PC-3 (cell line): ENCODE measurements at regions of chr12 and their contacts with region 1.

Region 1: DNA sequence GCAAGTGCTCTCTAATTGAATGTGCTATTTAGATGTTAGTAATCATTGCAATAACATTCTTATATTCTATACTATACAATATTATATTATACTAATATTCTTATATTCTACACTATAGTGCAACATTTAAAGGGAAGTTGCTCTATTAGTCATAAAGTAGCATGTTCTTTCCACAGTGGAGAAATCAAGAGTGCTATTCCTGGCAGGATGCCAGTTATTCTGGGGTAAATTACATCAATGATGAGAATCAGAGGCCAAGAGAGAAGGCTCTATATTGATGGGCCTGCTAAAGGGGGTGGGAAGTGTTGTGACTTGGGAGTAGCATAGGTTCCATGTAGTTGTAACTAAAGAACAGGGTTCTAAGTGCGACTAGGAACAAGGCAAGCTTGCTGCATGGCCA is 121.5 kb downstream of the SLC15A5 start:
- DNase-seq: no peak
- ATAC-seq: no peak
- H3K4me3 ChIP-seq: no peak overlapping the region
- H3K27ac ChIP-seq: no peak overlapping the region
- H3K4me1 ChIP-seq: no peaks in the 10 kb centered on the region
- H3K27me3 ChIP-seq: peaks cover 2% of the 10 kb centered on the region
- CTCF ChIP-seq: no peak

Region 2: GRCh38 chr12:15982471-15982870 is 173.5 kb before region 1 on chr12:
- CTCF ChIA-PET with region 1: no interaction called
- POLR2A ChIA-PET with region 1: no interaction called
- intact Hi-C with region 1: loop called (anchors 1 kb)
- DNase-seq: peak; percentile 46
- ATAC-seq: no peak
- H3K4me3 ChIP-seq: no peak overlapping the region
- H3K27ac ChIP-seq: no peak overlapping the region
- H3K4me1 ChIP-seq: peaks cover 30% of the 10 kb centered on the region
- H3K27me3 ChIP-seq: no peaks in the 10 kb centered on the region
- CTCF ChIP-seq: peak; percentile 55

Region 3: DNA sequence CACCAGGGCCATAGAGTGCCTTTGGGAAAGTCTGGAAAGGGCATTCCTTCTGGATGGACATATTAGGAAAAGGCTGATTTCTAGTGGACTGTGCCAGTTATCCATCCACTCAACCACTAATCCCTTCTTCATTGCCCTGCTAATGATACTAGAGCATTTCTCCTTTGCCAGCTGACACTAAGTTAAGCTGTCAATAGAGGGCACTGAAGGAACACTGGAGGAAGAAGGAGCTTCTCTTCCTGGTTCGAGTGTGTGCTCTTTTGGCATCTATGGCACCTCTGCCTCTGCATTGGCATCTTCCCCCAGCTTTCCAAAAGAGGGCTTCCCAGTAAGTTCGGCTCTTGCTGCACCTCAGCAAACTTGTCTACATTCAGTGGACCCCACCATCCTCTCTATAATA is 79.4 kb before region 1 on chr12:
- CTCF ChIA-PET with region 1: no interaction called
- POLR2A ChIA-PET with region 1: no interaction called
- intact Hi-C with region 1: loop called (anchors 5 kb)
- DNase-seq: peak; percentile 66
- ATAC-seq: peak; percentile 64
- H3K4me3 ChIP-seq: no peak overlapping the region
- H3K27ac ChIP-seq: no peak overlapping the region
- H3K4me1 ChIP-seq: no peaks in the 10 kb centered on the region
- H3K27me3 ChIP-seq: peaks cover 10% of the 10 kb centered on the region; the same call in 1 of the 2 replicates
- CTCF ChIP-seq: peak; percentile 69

Region 4: GRCh38 chr12:16272222-16272621 is 116.3 kb after region 1 on chr12:
- CTCF ChIA-PET with region 1: interaction called, 10 read pairs
- POLR2A ChIA-PET with region 1: no interaction called
- intact Hi-C with region 1: no loop called
- DNase-seq: peak; percentile 61
- ATAC-seq: peak; percentile 50
- H3K4me3 ChIP-seq: no peak overlapping the region
- H3K27ac ChIP-seq: no peak overlapping the region
- H3K4me1 ChIP-seq: peaks cover 4% of the 10 kb centered on the region; the same call in 1 of the 2 replicates
- H3K27me3 ChIP-seq: no peaks in the 10 kb centered on the region
- CTCF ChIP-seq: no peak